ENCODE measurements at regions of chr15 and their contacts with region 1.

Region 1: DNA sequence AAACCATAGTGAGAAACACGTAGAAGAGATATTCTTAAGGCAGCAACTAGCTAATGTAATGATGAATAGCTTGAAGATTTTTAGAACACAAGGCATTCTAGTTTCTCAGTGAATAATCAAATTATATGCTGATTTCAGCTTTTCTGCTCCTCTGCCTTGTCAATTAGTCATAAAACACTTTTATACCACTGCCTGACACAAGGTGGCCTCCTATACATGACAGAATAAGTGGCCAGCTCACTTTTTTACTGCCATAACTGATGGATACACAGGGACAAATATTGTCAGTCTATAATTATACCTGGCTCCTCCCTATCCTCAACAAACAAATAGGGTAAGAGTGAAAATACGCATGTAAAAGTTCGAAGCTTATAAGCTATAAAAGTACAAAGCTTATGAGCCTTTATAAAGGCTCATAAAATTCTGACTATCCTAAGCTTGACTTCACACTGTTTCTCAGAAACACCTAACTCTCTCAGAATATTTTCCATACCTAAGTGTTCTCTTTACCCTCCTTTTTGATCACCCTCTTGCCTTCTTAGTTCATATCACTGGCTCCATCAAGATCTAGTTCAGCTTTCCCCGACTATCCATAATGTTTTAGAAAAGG is 81.6 kb downstream of the HERC1 start:
- DNase-seq: peak; percentile 23
- ATAC-seq: peak; percentile 89
- H3K4me3 ChIP-seq: no peak overlapping the region
- H3K27ac ChIP-seq: no peak overlapping the region
- H3K4me1 ChIP-seq: no peaks in the 10 kb centered on the region
- H3K27me3 ChIP-seq: no peaks in the 10 kb centered on the region
- CTCF ChIP-seq: peak; percentile 55 to 82 (median 70); a peak in 5 of 6 replicates
- EP300 ChIP-seq: no peak
- POLR2A ChIP-seq: no peak
- RAD21 ChIP-seq: peak; percentile 90

Region 2: GRCh38 chr15:63288778-63289378 is 463.3 kb before region 1 on chr15:
- CTCF ChIA-PET with region 1: no interaction called
- POLR2A ChIA-PET with region 1: no interaction called
- RAD21 ChIA-PET with region 1: no interaction called
- SMC1A ChIA-PET with region 1: no interaction called
- in situ Hi-C with region 1: no loop called
- intact Hi-C with region 1: no loop called
- DNase-seq: no peak
- ATAC-seq: peak; percentile 82
- H3K4me3 ChIP-seq: no peak overlapping the region
- H3K27ac ChIP-seq: no peak overlapping the region
- H3K4me1 ChIP-seq: no peaks in the 10 kb centered on the region
- H3K27me3 ChIP-seq: no peaks in the 10 kb centered on the region
- CTCF ChIP-seq: peak; percentile 54 to 71 (median 60)
- EP300 ChIP-seq: no peak
- POLR2A ChIP-seq: no peak
- RAD21 ChIP-seq: peak; percentile 87

Region 3: GRCh38 chr15:63610200-63610841 is 141.9 kb before region 1 on chr15:
- CTCF ChIA-PET with region 1: interaction called, 15 read pairs
- POLR2A ChIA-PET with region 1: no interaction called
- RAD21 ChIA-PET with region 1: interaction called, 8 read pairs
- SMC1A ChIA-PET with region 1: interaction called, 18 read pairs
- in situ Hi-C with region 1: no loop called
- intact Hi-C with region 1: no loop called
- DNase-seq: peak; percentile 61
- ATAC-seq: peak; percentile 97
- H3K4me3 ChIP-seq: no peak overlapping the region
- H3K27ac ChIP-seq: peak overlapping the region; percentile 78
- H3K4me1 ChIP-seq: peaks cover 16% of the 10 kb centered on the region
- H3K27me3 ChIP-seq: no peaks in the 10 kb centered on the region
- CTCF ChIP-seq: peak; percentile 80 to 93 (median 89)
- EP300 ChIP-seq: no peak
- POLR2A ChIP-seq: no peak
- RAD21 ChIP-seq: peak; percentile 92

Region 4: DNA sequence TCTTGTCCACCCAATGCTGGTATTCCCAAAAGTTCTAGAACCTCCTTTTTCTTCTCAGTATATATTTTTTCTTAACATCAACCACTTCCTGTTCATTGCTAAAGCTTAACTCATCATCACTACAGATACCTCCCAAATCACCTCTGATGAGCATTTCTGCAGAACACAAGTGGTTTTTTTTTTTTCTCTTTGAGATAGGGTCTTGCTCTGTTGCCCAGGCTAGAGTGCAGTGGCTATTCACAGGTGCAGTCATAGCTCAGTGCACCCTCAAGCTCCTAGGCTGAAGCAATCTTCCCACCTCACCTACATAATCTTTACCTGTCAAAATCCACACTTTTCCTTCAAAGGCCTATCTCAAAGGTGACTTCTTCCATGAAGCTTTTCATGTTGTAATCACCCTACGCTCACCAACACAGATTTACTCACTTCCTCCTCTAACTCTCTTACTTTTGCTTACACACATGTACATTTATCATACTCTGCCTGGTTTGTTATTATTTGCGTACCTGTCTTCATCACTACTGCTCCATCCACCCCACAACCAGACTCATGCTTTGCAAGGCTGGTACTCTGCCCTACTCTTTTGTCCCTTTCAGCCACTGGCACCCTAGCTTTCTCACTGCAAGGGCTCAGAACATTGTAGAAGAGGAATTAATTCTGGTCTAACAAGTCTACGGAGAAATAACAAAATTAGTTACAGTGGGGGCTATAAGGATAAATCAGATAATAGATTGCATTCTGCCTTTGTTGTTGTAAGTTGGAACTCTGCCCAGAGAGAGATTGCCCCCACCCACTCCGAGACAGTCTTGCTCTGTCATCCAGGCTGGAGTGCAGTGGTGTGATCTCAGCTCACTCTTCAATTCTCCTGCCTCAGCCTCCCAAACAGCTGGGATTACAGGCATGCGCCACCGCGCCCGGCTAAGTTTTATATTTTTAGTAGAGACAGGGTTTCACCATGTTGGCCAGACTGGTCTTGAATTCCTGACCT is 54.1 kb after region 1 on chr15:
- CTCF ChIA-PET with region 1: interaction called, 4 read pairs
- POLR2A ChIA-PET with region 1: interaction called, 3 read pairs
- RAD21 ChIA-PET with region 1: interaction called, 4 read pairs
- SMC1A ChIA-PET with region 1: interaction called, 11 read pairs
- in situ Hi-C with region 1: no loop called
- intact Hi-C with region 1: no loop called
- DNase-seq: no peak
- ATAC-seq: peak; percentile 14; the same call in 2 of the 3 replicates
- H3K4me3 ChIP-seq: no peak overlapping the region
- H3K27ac ChIP-seq: no peak overlapping the region
- H3K4me1 ChIP-seq: peaks cover 35% of the 10 kb centered on the region
- H3K27me3 ChIP-seq: no peaks in the 10 kb centered on the region
- CTCF ChIP-seq: no peak
- EP300 ChIP-seq: no peak
- POLR2A ChIP-seq: no peak
- RAD21 ChIP-seq: no peak

Region 5: DNA sequence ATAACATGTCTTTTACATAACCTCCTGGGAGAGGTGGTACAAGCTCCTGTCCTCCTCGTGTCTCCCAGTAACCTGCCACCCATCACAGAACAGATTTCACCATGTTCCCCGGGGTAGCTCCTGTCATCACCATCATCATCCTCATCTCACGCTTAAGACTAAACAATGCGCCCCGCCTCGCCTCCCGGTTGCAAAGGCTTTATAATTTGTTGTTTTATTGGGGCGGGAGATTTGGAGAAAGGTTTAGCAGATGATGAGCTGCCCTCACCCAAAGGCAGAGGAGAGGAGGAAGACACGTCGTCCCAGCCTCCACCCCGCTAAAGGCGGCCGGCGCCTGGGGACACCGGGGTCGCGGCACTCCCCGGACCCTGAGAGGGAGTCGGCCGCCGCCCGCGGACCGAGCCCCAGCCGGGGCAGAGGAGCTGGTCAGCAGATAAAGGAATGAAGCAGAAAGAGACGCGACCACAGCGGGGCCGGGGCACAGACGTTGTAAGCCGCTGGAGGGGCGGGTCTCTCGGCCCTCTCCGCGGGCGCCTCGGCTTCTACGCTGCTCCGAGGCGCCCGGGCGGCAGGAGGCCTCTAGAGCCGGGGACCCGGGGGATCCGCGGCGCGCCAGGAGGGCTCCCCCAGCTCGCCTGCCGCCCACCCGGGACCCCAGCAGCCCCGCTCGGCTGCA is 81.0 kb after region 1 on chr15:
- CTCF ChIA-PET with region 1: interaction called, 8 read pairs
- POLR2A ChIA-PET with region 1: interaction called, 6 read pairs
- RAD21 ChIA-PET with region 1: interaction called, 17 read pairs
- SMC1A ChIA-PET with region 1: interaction called, 12 read pairs
- in situ Hi-C with region 1: no loop called
- intact Hi-C with region 1: loop called (anchors 5 kb)
- DNase-seq: no peak
- ATAC-seq: peak; percentile 68
- H3K4me3 ChIP-seq: peak overlapping the region; percentile 99
- H3K27ac ChIP-seq: peak overlapping the region; percentile 99
- H3K4me1 ChIP-seq: peaks cover 10% of the 10 kb centered on the region
- H3K27me3 ChIP-seq: no peaks in the 10 kb centered on the region
- CTCF ChIP-seq: no peak
- EP300 ChIP-seq: no peak
- POLR2A ChIP-seq: no peak
- RAD21 ChIP-seq: no peak

Region 6: GRCh38 chr15:63909819-63910437 is 157.7 kb after region 1 on chr15:
- CTCF ChIA-PET with region 1: interaction called, 10 read pairs
- POLR2A ChIA-PET with region 1: interaction called, 3 read pairs
- RAD21 ChIA-PET with region 1: interaction called, 8 read pairs
- SMC1A ChIA-PET with region 1: interaction called, 8 read pairs
- in situ Hi-C with region 1: no loop called
- intact Hi-C with region 1: no loop called
- DNase-seq: no peak
- ATAC-seq: no peak
- H3K4me3 ChIP-seq: no peak overlapping the region
- H3K27ac ChIP-seq: no peak overlapping the region
- H3K4me1 ChIP-seq: peaks cover 14% of the 10 kb centered on the region
- H3K27me3 ChIP-seq: no peaks in the 10 kb centered on the region
- CTCF ChIP-seq: no peak
- EP300 ChIP-seq: no peak
- POLR2A ChIP-seq: no peak
- RAD21 ChIP-seq: no peak

Region 7: DNA sequence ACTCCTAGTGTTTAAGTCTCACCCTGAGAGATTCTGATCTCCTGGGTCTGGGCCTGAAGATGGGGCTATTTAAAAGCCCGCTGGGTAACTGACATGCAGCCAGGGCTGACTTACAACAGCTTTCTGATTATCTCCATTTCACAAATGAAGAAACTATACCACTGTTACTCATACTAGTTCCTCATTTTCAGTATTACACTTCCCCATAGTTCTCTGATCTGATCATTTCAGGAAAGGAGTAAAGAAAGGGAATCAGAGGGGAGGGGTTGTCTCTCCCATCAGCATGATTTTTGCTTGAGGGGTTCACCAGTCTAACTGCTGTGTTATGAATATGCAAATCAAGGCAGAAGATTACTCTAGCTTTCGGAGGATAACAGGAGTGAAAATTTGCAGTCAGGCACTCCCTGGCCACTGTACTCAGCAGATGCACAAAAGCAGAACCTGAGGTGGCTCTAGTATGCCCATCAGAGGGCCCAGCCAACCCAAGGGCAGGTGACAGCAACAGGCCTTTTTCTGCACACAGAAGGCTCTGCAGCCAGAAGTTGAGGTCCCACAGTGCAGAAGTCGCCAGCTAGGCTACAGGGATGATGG is 234.7 kb after region 1 on chr15:
- CTCF ChIA-PET with region 1: interaction called, 93 read pairs
- POLR2A ChIA-PET with region 1: interaction called, 4 read pairs
- RAD21 ChIA-PET with region 1: interaction called, 33 read pairs
- SMC1A ChIA-PET with region 1: interaction called, 70 read pairs
- in situ Hi-C with region 1: no loop called
- intact Hi-C with region 1: no loop called
- DNase-seq: peak; percentile 96
- ATAC-seq: peak; percentile 83
- H3K4me3 ChIP-seq: peak overlapping the region; percentile 1; the same call in 1 of the 2 replicates
- H3K27ac ChIP-seq: peak overlapping the region; percentile 92
- H3K4me1 ChIP-seq: peaks cover 77% of the 10 kb centered on the region
- H3K27me3 ChIP-seq: no peaks in the 10 kb centered on the region
- CTCF ChIP-seq: peak in 1 of 3 experiments; percentile 36; a peak in 2 of 6 replicates
- EP300 ChIP-seq: peak in 1 of 2 experiments; percentile 61; a peak in 2 of 4 replicates
- POLR2A ChIP-seq: no peak
- RAD21 ChIP-seq: peak; percentile 52

Region 8: DNA sequence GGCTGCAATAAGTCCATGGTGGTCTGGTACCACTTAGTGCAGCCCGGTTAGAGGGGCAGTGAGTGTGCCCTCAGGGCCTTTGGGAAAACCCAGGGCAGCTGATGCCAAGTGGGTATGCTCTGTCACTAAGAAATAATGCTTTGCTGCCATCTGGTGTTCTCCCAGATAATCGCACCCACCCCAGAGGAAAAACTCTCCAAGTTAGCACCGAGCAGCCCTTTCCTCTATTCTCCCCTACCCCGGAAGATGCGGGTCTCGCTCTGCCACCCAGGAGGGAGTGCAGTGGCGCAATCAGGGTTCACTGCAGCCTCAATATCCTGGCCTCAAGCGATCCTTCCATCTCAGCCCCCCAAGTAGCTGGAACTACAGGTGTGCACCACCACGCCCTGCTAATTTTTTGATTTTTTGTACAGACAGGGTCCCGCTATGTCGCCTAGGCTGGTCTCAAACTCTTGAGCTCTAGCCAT is 315.4 kb after region 1 on chr15:
- CTCF ChIA-PET with region 1: interaction called, 140 read pairs
- POLR2A ChIA-PET with region 1: interaction called, 3 read pairs
- RAD21 ChIA-PET with region 1: interaction called, 67 read pairs
- SMC1A ChIA-PET with region 1: interaction called, 94 read pairs
- in situ Hi-C with region 1: loop called (anchors 5 kb)
- intact Hi-C with region 1: loop called (anchors 1 kb)
- DNase-seq: peak; percentile 40
- ATAC-seq: peak; percentile 94
- H3K4me3 ChIP-seq: no peak overlapping the region
- H3K27ac ChIP-seq: no peak overlapping the region
- H3K4me1 ChIP-seq: peaks cover 13% of the 10 kb centered on the region
- H3K27me3 ChIP-seq: no peaks in the 10 kb centered on the region
- CTCF ChIP-seq: peak; percentile 72 to 83 (median 77)
- EP300 ChIP-seq: no peak
- POLR2A ChIP-seq: no peak
- RAD21 ChIP-seq: peak; percentile 89

Measured in GM12878 (cell line).